GM10248 (cell line): ENCODE measurements at regions of chr6 and their contacts with region 1.

Region 1: DNA sequence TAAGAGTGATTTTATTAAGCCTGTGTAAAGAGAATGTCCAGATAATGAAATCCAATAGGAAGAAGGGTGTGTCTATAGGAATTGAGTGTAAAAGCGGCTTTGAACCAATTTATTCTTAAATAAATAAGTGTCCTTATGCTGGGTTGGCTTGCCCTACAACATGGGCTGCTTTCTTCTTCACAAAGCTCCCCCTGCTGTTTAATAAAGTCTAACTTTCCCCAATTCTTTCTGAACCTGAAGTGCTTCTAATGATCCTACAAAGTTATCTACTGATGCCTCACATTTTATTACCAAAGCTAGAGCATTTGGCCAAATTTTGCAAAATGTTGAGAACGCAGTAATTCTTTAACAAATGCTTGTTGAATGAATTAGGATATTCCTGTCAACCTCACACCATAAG is 36.3 kb upstream of the SIRT5 start:
- DNase-seq: peak; percentile 60
- CTCF ChIP-seq: peak; percentile 16

Region 2: GRCh38 chr6:13336553-13336952 is 201.5 kb before region 1 on chr6:
- CTCF ChIA-PET with region 1: interaction called, 21 read pairs
- POLR2A ChIA-PET with region 1: no interaction called
- DNase-seq: peak; percentile 68
- CTCF ChIP-seq: peak; percentile 88

Region 3: GRCh38 chr6:13526727-13527670 is 11.1 kb before region 1 on chr6:
- CTCF ChIA-PET with region 1: interaction called, 11 read pairs
- POLR2A ChIA-PET with region 1: no interaction called
- DNase-seq: peak; percentile 28
- CTCF ChIP-seq: no peak